ENCODE measurements at regions of chr9 and their contacts with region 1.

Region 1: GRCh38 chr9:87238545-87238944 is 259.1 kb upstream of the DAPK1 start:
- DNase-seq: no peak
- H3K4me3 ChIP-seq: no peak overlapping the region
- H3K27ac ChIP-seq: no peak overlapping the region
- H3K4me1 ChIP-seq: no peaks in the 10 kb centered on the region
- H3K27me3 ChIP-seq: no peaks in the 10 kb centered on the region
- CTCF ChIP-seq: no peak
- POLR2A ChIP-seq: no peak

Region 2: DNA sequence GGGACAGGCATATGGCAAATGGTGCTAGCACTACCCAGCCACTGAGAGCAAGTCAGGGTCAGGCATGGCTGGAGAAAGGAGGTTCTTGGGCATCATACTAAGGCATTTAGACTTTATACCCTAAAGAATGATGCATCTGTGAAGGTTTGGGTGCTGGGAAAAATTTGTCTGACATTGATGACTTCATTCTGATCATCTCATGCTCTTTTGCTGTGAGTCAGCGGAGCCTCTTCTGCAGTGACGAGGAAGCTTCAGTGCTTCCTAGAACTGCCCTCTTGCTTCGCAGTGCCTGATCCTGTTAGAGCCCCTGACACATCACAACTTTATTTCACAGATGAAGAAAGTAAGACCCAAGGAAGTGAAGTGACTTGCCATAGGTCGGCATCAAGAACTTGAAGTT is 24.6 kb before region 1 on chr9:
- intact Hi-C with region 1: loop called (anchors 1 kb)
- DNase-seq: no peak
- H3K4me3 ChIP-seq: no peak overlapping the region
- H3K27ac ChIP-seq: peak overlapping the region; percentile 5 to 38
- H3K4me1 ChIP-seq: no peaks in the 10 kb centered on the region
- H3K27me3 ChIP-seq: no peaks in the 10 kb centered on the region
- CTCF ChIP-seq: no peak
- POLR2A ChIP-seq: no peak

Region 3: GRCh38 chr9:87226896-87227295 is 11.6 kb before region 1 on chr9:
- intact Hi-C with region 1: no loop called
- DNase-seq: no peak
- H3K4me3 ChIP-seq: no peak overlapping the region
- H3K27ac ChIP-seq: no peak overlapping the region
- H3K4me1 ChIP-seq: peaks cover 0 to 3% of the 10 kb centered on the region in 2 donors
- H3K27me3 ChIP-seq: no peaks in the 10 kb centered on the region
- CTCF ChIP-seq: no peak
- POLR2A ChIP-seq: no peak

Measured in breast epithelium (tissue), 4 donors.